ENCODE measurements at regions of chr3 and their contacts with region 1.

Region 1: DNA sequence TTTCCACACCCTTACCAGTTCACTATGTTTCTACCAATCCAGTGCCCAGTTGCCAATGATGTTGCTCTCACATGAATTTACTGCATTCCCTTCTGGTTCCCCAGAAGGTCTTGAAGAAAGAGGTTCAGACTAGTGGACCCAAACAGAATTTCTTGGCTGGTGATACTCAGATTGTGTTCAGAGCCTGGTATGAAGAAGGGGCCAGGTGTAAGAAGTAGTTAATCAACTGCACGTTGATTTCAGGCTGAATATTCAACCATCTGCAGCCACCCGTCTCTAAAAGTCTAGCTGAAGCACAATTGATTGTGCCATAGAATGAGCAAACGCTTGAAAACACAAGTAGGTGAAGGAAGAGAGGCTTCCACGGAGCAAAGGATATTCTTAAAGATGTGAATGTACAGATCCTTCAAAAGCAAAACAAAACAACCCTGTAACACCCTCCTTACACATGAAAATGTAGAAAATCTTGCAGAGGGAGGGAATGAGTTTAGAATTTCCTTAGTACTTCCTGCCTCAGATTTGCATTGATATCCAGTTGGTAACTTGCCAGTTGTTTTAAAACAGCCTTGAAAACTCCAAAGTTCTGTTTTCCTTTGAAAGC is 4.7 kb downstream of the RBMS3 start:
- DNase-seq: no peak
- ATAC-seq: no peak
- H3K4me3 ChIP-seq: peak overlapping the region in 9 of 10 donors; percentile 12 to 69 (median 43)
- H3K27ac ChIP-seq: peak overlapping the region; percentile 15 to 96 (median 62)
- H3K4me1 ChIP-seq: peaks cover 0 to 54% (median 43%) of the 10 kb centered on the region in 9 donors
- H3K27me3 ChIP-seq: no peaks in the 10 kb centered on the region
- CTCF ChIP-seq: no peak

Region 2: GRCh38 chr3:29324180-29324651 is 38.6 kb after region 1 on chr3:
- intact Hi-C with region 1: loop called in 2 of 10 experiments (anchors 5 kb)
- DNase-seq: peak; percentile 14 to 67
- ATAC-seq: peak; percentile 65 to 93 (median 88)
- H3K4me3 ChIP-seq: peak overlapping the region in 8 of 10 donors; percentile 5 to 40 (median 34)
- H3K27ac ChIP-seq: peak overlapping the region; percentile 4 to 83 (median 74)
- H3K4me1 ChIP-seq: peaks cover 4 to 74% (median 42%) of the 10 kb centered on the region in 9 donors
- H3K27me3 ChIP-seq: no peaks in the 10 kb centered on the region
- CTCF ChIP-seq: no peak

Region 3: GRCh38 chr3:29335438-29335837 is 49.9 kb after region 1 on chr3:
- intact Hi-C with region 1: loop called in 7 of 10 experiments (anchors 1 to 10 kb)
- DNase-seq: peak; percentile 51 to 87
- ATAC-seq: peak; percentile 88 to 98 (median 94)
- H3K4me3 ChIP-seq: peak overlapping the region in 9 of 10 donors; percentile 10 to 46 (median 38)
- H3K27ac ChIP-seq: peak overlapping the region in 9 of 10 donors; percentile 2 to 92 (median 83)
- H3K4me1 ChIP-seq: peaks cover 10 to 97% (median 72%) of the 10 kb centered on the region in 9 donors
- H3K27me3 ChIP-seq: no peaks in the 10 kb centered on the region
- CTCF ChIP-seq: no peak